ENCODE measurements at regions of chr1 and their contacts with region 1.

Region 1: DNA sequence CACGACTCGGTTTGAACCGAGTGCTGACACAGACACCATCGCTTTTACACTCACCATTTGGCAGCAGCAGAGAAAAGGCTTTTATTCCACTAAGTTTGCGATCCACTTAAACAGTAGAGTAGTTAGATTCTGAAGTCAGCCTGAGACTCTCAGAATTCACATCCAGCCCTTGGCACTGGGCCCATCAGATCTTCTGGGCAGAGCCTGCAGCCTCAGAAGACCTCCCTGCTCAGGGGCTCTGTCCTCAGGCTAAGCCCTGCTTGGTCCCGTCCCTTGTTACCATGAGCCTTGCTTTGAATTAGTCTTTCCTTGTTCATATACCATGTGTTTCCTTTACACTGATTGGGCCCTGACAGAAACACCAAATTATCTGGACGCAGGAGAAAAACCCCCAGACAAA is 41.4 kb upstream of the AJAP1 start:
- DNase-seq: no peak
- H3K4me3 ChIP-seq: no peak overlapping the region
- H3K27ac ChIP-seq: no peak overlapping the region
- H3K4me1 ChIP-seq: no peaks in the 10 kb centered on the region
- H3K27me3 ChIP-seq: no peaks in the 10 kb centered on the region
- CTCF ChIP-seq: no peak

Region 2: DNA sequence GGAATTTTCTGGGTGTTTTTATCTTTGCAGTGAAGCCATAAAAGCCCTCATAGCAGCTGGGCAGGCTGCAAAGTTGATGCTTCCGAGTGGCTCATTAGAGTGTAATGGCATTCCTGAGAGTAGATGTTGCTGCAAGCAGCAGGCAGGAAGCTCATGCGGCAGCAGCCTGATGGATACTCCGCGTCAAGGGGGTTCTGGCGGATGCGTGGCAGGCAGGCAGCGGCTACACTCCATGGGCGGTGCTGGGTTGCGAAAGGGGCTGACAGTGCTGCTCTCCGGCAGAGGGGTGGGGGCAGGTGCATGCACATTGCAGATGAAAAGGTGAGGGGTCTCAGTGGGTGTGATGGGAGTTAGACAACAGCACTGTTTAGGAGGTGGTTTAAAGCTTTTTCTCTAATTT is 51.8 kb before region 1 on chr1:
- CTCF ChIA-PET with region 1: no interaction called
- dilution Hi-C with region 1: loop called (anchors 5 kb)
- in situ Hi-C with region 1: no loop called
- intact Hi-C with region 1: no loop called
- DNase-seq: no peak
- H3K4me3 ChIP-seq: no peak overlapping the region
- H3K27ac ChIP-seq: no peak overlapping the region
- H3K4me1 ChIP-seq: no peaks in the 10 kb centered on the region
- H3K27me3 ChIP-seq: no peaks in the 10 kb centered on the region
- CTCF ChIP-seq: no peak